ENCODE measurements at regions of chr7 and their contacts with region 1.

Region 1: DNA sequence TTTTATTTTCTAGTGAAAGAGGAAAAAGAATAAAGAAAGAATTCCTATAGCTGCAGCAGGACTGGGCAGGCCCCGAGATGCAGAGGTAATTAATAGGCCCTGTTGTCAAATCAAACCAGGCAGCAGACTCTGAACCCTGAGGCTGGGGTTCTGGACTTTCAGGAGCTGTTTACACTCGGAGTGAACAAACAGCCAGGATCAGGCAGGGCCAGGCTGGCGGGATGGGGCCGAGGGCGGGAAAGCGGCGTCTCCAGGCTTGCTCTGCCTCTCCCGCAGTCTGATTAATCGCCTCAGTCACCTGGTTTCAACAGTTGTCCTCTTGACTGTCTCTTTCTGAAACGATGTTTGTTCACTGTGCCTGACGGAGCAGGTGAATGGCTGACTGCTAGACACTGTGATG is 675.4 kb upstream of the FOXK1 start:
- DNase-seq: peak; percentile 89
- H3K4me3 ChIP-seq: no peak overlapping the region
- H3K27ac ChIP-seq: peak overlapping the region in 1 of 2 experiments; percentile 24; a peak in 2 of 4 replicates
- H3K4me1 ChIP-seq: peaks cover 0 to 11% of the 10 kb centered on the region in 2 experiments; a peak in 2 of 4 replicates
- H3K27me3 ChIP-seq: no peaks in the 10 kb centered on the region
- CTCF ChIP-seq: no peak
- EP300 ChIP-seq: peak in 1 of 2 experiments; percentile 86; a peak in 2 of 4 replicates
- RAD21 ChIP-seq: peak; percentile 36

Region 2: DNA sequence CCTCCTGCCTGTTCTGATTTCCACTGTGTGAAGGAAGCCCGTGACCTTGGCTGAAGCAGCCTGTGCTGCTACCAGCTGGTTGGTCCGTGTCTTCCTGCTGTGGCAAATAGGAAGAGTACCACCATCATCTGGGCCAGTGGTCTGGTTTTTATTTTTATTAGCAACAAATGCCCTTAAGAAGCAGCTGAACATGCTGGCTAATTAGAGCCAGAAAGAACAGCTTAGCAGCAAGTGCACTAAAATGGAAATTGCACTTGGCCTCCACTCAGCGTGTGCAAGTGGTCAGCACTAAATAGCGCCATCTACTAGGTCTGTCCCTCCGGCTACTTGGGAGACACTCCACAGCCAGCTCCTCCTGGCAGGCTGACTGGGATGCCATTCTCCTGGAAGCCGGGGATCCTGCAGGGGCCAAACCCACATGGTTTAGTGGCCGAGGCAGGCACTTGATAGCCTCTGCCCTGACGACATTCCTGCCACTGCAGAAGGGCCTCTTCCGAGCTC is 14.9 kb before region 1 on chr7:
- CTCF ChIA-PET with region 1: interaction called, 12 read pairs
- POLR2A ChIA-PET with region 1: no interaction called
- DNase-seq: peak; percentile 71
- H3K4me3 ChIP-seq: no peak overlapping the region
- H3K27ac ChIP-seq: peak overlapping the region in 1 of 2 experiments; percentile 74; a peak in 2 of 4 replicates
- H3K4me1 ChIP-seq: peaks cover 0 to 28% of the 10 kb centered on the region in 2 experiments; a peak in 1 of 4 replicates
- H3K27me3 ChIP-seq: no peaks in the 10 kb centered on the region
- CTCF ChIP-seq: no peak
- EP300 ChIP-seq: peak in 1 of 2 experiments; percentile 45; a peak in 1 of 4 replicates
- RAD21 ChIP-seq: peak; percentile 58